Activated CD4-positive, alpha-beta memory T cell treated with anti-CD3 and anti-CD28 coated beads for 36 hours (primary cell): ENCODE measurements at regions of chr6 and their contacts with region 1.

Region 1: DNA sequence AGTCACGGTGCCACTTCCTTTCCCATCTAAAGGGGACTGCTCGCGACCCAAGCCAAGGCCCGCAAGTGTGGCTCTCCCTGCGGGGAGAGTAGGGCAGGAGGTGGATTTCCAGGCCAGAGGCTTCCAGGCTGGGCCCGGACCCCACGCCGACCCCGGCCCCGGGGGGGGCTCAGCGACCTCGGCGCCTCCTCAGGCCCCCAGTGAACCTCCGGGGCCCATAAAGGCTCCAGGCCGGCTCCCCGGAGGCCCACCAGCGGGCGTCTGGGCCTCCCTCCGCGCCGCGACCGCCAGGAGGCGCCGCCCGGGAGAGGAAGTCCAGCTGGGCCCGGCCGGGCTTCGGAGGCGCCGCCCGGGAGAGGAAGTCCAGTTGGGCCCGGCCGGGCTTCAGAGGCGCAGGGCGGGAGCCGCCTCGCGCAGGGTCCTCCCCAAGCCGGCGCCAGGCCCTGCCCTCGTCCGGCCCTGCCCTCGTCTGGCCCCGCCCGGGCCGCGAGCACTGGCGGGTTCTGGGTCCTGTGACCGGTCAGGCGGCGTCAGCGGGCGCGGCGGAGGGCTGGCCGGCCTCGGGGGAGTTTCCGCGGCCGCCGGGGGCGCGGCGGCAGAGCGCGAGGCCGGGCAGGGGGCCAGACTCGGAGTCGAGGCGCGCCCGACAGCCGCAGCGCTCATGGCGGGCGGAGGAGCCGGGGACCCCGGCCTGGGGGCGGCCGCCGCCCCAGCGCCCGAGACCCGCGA is at the start of gene RAB32:
- DNase-seq: peak; percentile 14
- H3K4me3 Mint-ChIP-seq: peak within 1 kb of the TSS; percentile 57
- H3K27ac Mint-ChIP-seq: no peak within 1 kb of the TSS
- H3K4me1 Mint-ChIP-seq: peaks cover 7% of the 10 kb centered on the region
- H3K27me3 Mint-ChIP-seq: peaks cover 28% of the 10 kb centered on the region
- total RNA-seq, gene RAB32: 0.24 to 0.44 TPM

Region 2: GRCh38 chr6:146515212-146515611 is 28.2 kb before region 1 on chr6:
- CTCF ChIA-PET with region 1: no interaction called
- POLR2A ChIA-PET with region 1: no interaction called
- intact Hi-C with region 1: no loop called
- DNase-seq: no peak
- H3K4me3 Mint-ChIP-seq: no peak overlapping the region
- H3K27ac Mint-ChIP-seq: no peak overlapping the region
- H3K4me1 Mint-ChIP-seq: no peaks in the 10 kb centered on the region
- H3K27me3 Mint-ChIP-seq: no peaks in the 10 kb centered on the region

Region 3: GRCh38 chr6:146785001-146785585 is 241.7 kb after region 1 on chr6:
- CTCF ChIA-PET with region 1: interaction called, 3 read pairs
- POLR2A ChIA-PET with region 1: no interaction called
- intact Hi-C with region 1: loop called (anchors 10 kb)
- DNase-seq: peak; percentile 13
- H3K4me3 Mint-ChIP-seq: no peak overlapping the region
- H3K27ac Mint-ChIP-seq: no peak overlapping the region
- H3K4me1 Mint-ChIP-seq: peaks cover 9% of the 10 kb centered on the region
- H3K27me3 Mint-ChIP-seq: peaks cover 1% of the 10 kb centered on the region